GM13977 (cell line): ENCODE measurements at regions of chr1 and their contacts with region 1.

Region 1: DNA sequence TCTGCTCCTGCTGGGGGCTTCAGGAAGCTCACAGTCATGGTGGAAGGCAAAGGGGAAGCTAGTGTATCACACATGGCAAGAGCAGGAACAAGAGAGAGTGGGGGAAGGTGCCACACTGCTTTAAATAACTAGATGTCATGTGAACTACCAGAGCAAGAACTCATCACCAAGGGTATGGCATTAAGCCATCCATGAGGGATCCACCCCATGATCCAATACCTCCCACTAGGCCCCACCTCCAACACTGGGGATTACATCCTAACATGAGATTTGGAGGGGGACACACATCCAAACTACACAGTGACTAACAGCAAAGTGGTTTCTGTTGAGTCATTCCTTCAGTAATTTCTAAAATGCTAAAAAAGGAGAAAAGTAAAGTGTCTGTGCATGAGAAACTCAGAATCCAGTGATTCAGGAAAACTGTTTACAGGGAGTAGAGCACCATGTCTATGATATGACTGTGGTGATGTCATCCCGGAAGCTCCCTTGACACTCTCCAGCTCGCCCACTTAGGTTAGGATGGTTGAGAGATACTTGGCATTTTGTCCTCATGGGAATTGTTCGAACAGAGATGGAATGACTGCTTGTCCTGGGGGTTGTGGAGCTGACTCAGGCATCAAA is 50.3 kb downstream of the CHD1L start:
- DNase-seq: no peak
- CTCF ChIP-seq: no peak

Region 2: DNA sequence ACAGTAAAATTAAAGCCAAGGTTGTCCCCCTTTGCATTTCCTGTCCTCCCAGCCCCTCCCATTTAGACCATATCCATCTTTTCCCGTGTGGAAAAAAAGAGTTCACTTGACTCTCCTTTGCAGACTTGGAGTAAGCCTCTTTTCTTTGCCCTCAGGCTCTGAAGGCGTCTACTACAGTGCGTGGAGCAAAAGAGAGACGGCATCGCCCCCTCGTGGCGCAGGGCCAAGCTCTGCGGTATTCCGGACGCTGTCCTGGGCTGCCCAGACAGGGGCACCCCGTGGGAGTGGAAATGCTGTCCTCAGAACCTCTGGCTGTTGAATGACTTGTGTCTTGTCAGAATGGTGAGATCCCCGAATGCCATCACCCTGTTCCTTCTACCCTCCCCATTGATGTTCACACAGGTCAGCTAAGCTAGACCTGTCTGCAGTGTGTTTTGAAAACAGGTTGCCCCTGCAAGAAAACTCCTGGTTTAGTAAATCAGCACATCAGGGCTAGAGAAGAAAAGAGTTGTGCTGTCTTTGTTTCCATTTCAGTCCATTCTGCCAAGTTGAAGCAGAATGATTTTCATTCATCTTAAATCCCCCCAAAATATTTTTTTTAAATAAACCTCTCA is 597.5 kb after region 1 on chr1:
- in situ Hi-C with region 1: loop called (anchors 25 kb)
- DNase-seq: peak; percentile 53
- CTCF ChIP-seq: peak; percentile 85